ENCODE measurements at regions of chr10 and their contacts with region 1.

Region 1: GRCh38 chr10:114937962-114938855 is at the start of gene TRUB1:
- DNase-seq: peak; percentile 97
- H3K4me3 ChIP-seq: peak within 1 kb of the TSS; percentile 79
- H3K27ac ChIP-seq: peak within 1 kb of the TSS; percentile 91
- H3K4me1 ChIP-seq: peaks cover 6% of the 10 kb centered on the region
- H3K27me3 ChIP-seq: no peaks in the 10 kb centered on the region
- CTCF ChIP-seq: no peak
- total RNA-seq, gene TRUB1: 29.6 and 30.0 TPM in 2 replicates

Region 2: DNA sequence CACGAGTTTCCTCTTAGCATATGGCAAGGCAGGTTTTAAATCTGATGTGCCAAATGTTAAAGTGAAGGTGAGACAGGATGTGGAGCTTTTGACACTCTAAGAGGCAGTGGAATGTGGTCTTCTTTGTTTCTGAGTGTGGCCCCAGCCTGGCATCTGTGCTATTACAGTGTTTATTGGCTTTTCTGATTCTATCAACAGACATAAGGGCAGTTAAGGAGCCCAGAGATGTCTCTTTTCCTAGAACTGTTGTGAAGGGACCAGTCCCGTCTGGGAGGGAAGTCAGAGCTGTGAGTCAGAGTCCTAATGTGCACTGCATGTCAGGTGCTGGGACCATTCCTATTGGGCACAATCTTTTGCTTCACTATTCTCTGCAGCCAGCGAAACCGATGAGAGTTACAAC is 32.3 kb after region 1 on chr10:
- CTCF ChIA-PET with region 1: no interaction called
- POLR2A ChIA-PET with region 1: interaction called, 17 read pairs
- intact Hi-C with region 1: no loop called
- DNase-seq: peak; percentile 1
- H3K4me3 ChIP-seq: no peak overlapping the region
- H3K27ac ChIP-seq: no peak overlapping the region
- H3K4me1 ChIP-seq: no peaks in the 10 kb centered on the region
- H3K27me3 ChIP-seq: no peaks in the 10 kb centered on the region
- CTCF ChIP-seq: no peak

Region 3: GRCh38 chr10:115092555-115093285 is 154.5 kb after region 1 on chr10:
- CTCF ChIA-PET with region 1: no interaction called
- POLR2A ChIA-PET with region 1: no interaction called
- intact Hi-C with region 1: loop called (anchors 5 kb)
- DNase-seq: peak; percentile 49
- H3K4me3 ChIP-seq: peak overlapping the region; percentile 69
- H3K27ac ChIP-seq: peak overlapping the region; percentile 42
- H3K4me1 ChIP-seq: peaks cover 5% of the 10 kb centered on the region
- H3K27me3 ChIP-seq: peaks cover 56% of the 10 kb centered on the region
- CTCF ChIP-seq: no peak

Region 4: DNA sequence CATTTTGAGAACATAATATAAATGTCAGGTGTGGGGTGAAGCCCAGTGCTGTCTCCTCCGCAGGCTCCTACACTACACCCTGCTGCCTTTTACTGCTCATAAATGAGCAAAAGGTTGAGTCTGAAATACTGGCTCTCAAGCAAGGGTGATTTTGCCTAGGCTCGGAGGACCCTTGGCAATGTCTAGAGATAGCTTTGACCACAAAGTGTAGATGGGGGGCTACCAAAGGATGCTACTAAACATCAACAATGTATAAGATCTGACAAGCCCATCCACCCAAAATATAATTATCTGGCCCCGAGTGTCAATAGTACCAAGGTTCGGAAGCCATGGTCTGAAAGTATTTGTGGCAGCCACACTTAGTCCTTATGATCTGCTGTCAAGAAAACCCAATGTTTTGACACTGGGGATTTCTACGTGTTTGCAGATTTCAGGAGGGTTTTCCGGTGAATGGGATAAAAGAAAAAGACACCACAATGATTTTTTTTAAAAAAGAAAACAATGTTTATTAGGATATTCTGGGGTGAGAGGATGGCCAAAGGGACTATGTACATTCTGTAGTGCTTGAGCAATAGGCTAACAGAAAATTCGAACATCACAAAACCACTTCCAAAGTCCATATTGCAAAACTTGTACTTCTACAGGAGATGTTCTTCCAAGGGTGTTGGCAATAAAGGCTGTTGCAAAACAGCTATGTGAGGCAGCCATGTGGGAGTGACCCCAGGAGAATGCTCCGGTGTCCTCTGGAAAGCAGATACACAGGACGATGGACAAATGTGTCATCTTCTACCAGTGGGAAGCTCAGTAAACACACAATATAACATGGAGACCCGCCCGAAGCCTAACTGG is 1118.5 kb after region 1 on chr10:
- CTCF ChIA-PET with region 1: no interaction called
- POLR2A ChIA-PET with region 1: no interaction called
- intact Hi-C with region 1: no loop called
- DNase-seq: no peak
- H3K4me3 ChIP-seq: no peak overlapping the region
- H3K27ac ChIP-seq: no peak overlapping the region
- H3K4me1 ChIP-seq: no peaks in the 10 kb centered on the region
- H3K27me3 ChIP-seq: peaks cover 67% of the 10 kb centered on the region
- CTCF ChIP-seq: no peak